ENCODE measurements at regions of chr3 and their contacts with region 1.

Region 1: GRCh38 chr3:140736863-140737460 is 59.1 kb downstream of the TRIM42 start:
- DNase-seq: peak; percentile 73
- H3K4me3 Mint-ChIP-seq: no peak overlapping the region
- H3K27ac Mint-ChIP-seq: no peak overlapping the region
- H3K4me1 Mint-ChIP-seq: no peaks in the 10 kb centered on the region
- H3K27me3 Mint-ChIP-seq: peaks cover 98% of the 10 kb centered on the region
- CTCF ChIP-seq: peak; percentile 74

Region 2: GRCh38 chr3:140128631-140129030 is 608.3 kb before region 1 on chr3:
- CTCF ChIA-PET with region 1: interaction called, 4 read pairs
- intact Hi-C with region 1: loop called (anchors 1 kb)
- DNase-seq: peak; percentile 73
- H3K4me3 Mint-ChIP-seq: no peak overlapping the region
- H3K27ac Mint-ChIP-seq: no peak overlapping the region
- H3K4me1 Mint-ChIP-seq: no peaks in the 10 kb centered on the region
- H3K27me3 Mint-ChIP-seq: peaks cover 45% of the 10 kb centered on the region
- CTCF ChIP-seq: peak; percentile 83

Region 3: GRCh38 chr3:140363801-140364200 is 373.2 kb before region 1 on chr3:
- CTCF ChIA-PET with region 1: no interaction called
- intact Hi-C with region 1: loop called (anchors 5 kb)
- DNase-seq: peak; percentile 30
- H3K4me3 Mint-ChIP-seq: no peak overlapping the region
- H3K27ac Mint-ChIP-seq: no peak overlapping the region
- H3K4me1 Mint-ChIP-seq: no peaks in the 10 kb centered on the region
- H3K27me3 Mint-ChIP-seq: peaks cover 40% of the 10 kb centered on the region
- CTCF ChIP-seq: no peak

Region 4: DNA sequence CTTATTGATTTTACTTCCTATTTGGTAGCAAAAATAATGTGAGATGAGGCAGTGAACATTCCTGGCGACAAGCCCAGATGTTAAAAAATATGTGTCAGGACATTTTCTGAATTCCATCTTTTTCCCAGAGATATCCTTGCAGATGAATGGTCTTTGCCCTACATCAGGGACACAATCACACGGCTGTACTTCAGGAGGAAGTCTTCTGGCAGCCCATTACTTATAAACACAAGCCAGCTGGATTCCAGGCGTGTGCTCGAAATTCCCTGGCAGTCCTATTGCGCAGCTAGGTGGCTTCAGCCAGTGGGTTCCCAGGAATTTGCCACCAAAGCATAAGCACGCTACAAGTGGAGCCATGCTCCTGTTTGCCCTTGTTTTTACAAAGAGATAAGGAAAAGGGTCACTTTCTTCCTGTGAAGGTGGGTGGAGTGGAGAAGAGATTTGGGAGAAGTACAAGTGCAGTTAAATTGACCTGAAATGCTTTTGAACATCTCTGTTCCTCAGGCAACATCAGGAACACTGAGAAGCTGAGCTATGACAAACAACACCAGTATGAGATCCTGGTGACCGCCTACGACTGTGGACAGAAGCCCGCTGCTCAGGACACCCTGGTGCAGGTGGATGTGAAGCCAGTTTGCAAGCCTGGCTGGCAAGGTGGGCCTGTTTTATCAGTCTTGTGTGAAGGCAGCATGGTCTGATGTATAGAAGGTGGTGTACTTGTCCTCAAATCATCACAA is 316.2 kb before region 1 on chr3:
- CTCF ChIA-PET with region 1: no interaction called
- intact Hi-C with region 1: loop called (anchors 10 kb)
- DNase-seq: peak; percentile 25
- H3K4me3 Mint-ChIP-seq: no peak overlapping the region
- H3K27ac Mint-ChIP-seq: no peak overlapping the region
- H3K4me1 Mint-ChIP-seq: no peaks in the 10 kb centered on the region
- H3K27me3 Mint-ChIP-seq: peaks cover 66% of the 10 kb centered on the region
- CTCF ChIP-seq: no peak

Region 5: GRCh38 chr3:140610544-140610943 is 126.4 kb before region 1 on chr3:
- CTCF ChIA-PET with region 1: no interaction called
- intact Hi-C with region 1: loop called (anchors 5 kb)
- DNase-seq: no peak
- H3K4me3 Mint-ChIP-seq: no peak overlapping the region
- H3K27ac Mint-ChIP-seq: no peak overlapping the region
- H3K4me1 Mint-ChIP-seq: no peaks in the 10 kb centered on the region
- H3K27me3 Mint-ChIP-seq: peaks cover 39% of the 10 kb centered on the region
- CTCF ChIP-seq: no peak

Region 6: DNA sequence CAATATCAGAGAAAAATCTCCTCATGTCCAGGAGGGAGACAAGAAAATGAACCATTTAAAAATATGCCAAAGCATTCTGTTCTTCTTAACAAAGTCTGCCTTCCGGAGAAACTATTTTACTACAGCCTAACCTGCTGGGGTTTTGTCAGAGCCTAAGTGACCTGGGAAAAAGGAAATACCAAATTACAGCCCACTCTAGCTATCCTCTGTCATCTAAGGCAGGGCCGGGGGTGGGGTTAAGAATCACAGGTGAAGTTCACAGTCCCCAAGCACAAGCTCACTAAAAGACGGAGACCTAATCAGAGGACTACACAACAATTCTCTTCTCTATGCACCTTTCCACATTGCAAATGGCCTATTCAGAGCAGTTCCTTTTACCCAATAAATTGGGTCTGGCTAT is 57.5 kb after region 1 on chr3:
- CTCF ChIA-PET with region 1: no interaction called
- intact Hi-C with region 1: no loop called
- DNase-seq: no peak
- H3K4me3 Mint-ChIP-seq: no peak overlapping the region
- H3K27ac Mint-ChIP-seq: no peak overlapping the region
- H3K4me1 Mint-ChIP-seq: no peaks in the 10 kb centered on the region
- H3K27me3 Mint-ChIP-seq: no peaks in the 10 kb centered on the region
- CTCF ChIP-seq: no peak

Region 7: DNA sequence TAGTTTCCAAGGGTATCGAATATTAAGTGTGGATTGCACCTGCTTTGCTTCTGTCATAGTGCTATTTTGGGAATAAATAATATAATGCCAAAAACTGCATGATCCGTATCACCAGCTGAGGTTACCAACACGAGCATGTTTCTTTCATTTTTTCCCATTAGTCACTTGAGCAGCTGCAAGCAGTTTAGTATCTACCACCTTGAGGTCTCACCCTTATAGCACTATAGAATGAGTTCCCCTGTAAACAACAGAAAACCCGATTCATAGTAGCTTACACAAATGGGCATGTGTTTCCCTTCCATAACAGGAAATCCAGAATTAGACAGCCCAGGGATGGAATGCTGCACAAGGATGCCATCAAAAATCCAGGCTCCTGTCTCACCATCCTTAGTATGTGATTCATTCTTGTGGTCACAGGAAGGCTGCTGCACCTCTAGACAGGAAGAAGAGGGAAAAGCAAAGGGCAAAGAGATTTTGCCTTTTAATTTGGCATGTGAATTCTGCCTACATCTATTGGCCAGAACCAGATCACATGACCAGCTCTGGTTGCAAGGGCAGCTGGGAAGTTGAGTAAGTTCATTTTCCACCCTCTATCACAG is 113.3 kb after region 1 on chr3:
- CTCF ChIA-PET with region 1: no interaction called
- intact Hi-C with region 1: no loop called
- DNase-seq: no peak
- H3K4me3 Mint-ChIP-seq: no peak overlapping the region
- H3K27ac Mint-ChIP-seq: no peak overlapping the region
- H3K4me1 Mint-ChIP-seq: no peaks in the 10 kb centered on the region
- H3K27me3 Mint-ChIP-seq: peaks cover 62% of the 10 kb centered on the region
- CTCF ChIP-seq: no peak

Measured in Calu3 (cell line).